Stomach (tissue), 19 donors: ENCODE measurements at regions of chr1 and their contacts with region 1.

Region 1: GRCh38 chr1:171233190-171233589 is 15.1 kb upstream of the FMO1 start:
- DNase-seq: no peak
- H3K4me3 ChIP-seq: no peak overlapping the region
- H3K27ac ChIP-seq: no peak overlapping the region
- H3K4me1 ChIP-seq: no peaks in the 10 kb centered on the region
- H3K27me3 ChIP-seq: no peaks in the 10 kb centered on the region
- CTCF ChIP-seq: no peak
- EP300 ChIP-seq: no peak
- POLR2A ChIP-seq: no peak

Region 2: GRCh38 chr1:171081314-171081753 is 151.9 kb before region 1 on chr1:
- intact Hi-C with region 1: loop called (anchors 5 kb)
- DNase-seq: peak in 1 of 2 donors; percentile 74
- H3K4me3 ChIP-seq: peak overlapping the region in 1 of 4 donors; percentile 17
- H3K27ac ChIP-seq: peak overlapping the region in 4 of 5 donors; percentile 28 to 69 (median 60)
- H3K4me1 ChIP-seq: peaks cover 0 to 20% (median 11%) of the 10 kb centered on the region in 4 donors
- H3K27me3 ChIP-seq: no peaks in the 10 kb centered on the region
- CTCF ChIP-seq: peak in 5 of 7 experiments; percentile 25 to 61 (median 31)
- EP300 ChIP-seq: no peak
- POLR2A ChIP-seq: no peak